ENCODE measurements at regions of chr4 and their contacts with region 1.

Region 1: GRCh38 chr4:39458505-39459300 is at the starts of genes LIAS and RPL9:
- DNase-seq: peak; percentile 97 to 98
- ATAC-seq: peak; percentile 99
- H3K4me3 ChIP-seq: peak within 1 kb of the TSS; percentile 60 to 69
- H3K27ac ChIP-seq: peak within 1 kb of the TSS; percentile 81 to 95
- H3K4me1 ChIP-seq: peaks cover 0 to 1% of the 10 kb centered on the region in 2 donors
- H3K27me3 ChIP-seq: no peaks in the 10 kb centered on the region
- total RNA-seq, gene LIAS: 5.9 to 12.6 TPM
- total RNA-seq, gene RPL9: 1,118 to 1,464 TPM

Region 2: GRCh38 chr4:38243388-38244053 is 1215.2 kb before region 1 on chr4:
- intact Hi-C with region 1: no loop called
- DNase-seq: no peak
- ATAC-seq: no peak
- H3K4me3 ChIP-seq: no peak overlapping the region
- H3K27ac ChIP-seq: no peak overlapping the region
- H3K4me1 ChIP-seq: no peaks in the 10 kb centered on the region
- H3K27me3 ChIP-seq: no peaks in the 10 kb centered on the region

Region 3: GRCh38 chr4:39365830-39366771 is 92.6 kb before region 1 on chr4 and contains the start of gene RFC1:
- intact Hi-C with region 1: loop called in 1 of 2 experiments (anchors 10 kb)
- DNase-seq: peak; percentile 96 to 98
- ATAC-seq: peak; percentile 94
- H3K4me3 ChIP-seq: peak within 1 kb of the TSS; percentile 60 to 66
- H3K27ac ChIP-seq: peak within 1 kb of the TSS in 1 of 2 donors; percentile 49
- H3K4me1 ChIP-seq: peaks cover 0 to 3% of the 10 kb centered on the region in 2 donors
- H3K27me3 ChIP-seq: no peaks in the 10 kb centered on the region
- total RNA-seq, gene RFC1: 36.3 to 58.3 TPM

Region 4: GRCh38 chr4:39638354-39639240 is 179.9 kb after region 1 on chr4 and contains the start of gene SMIM14:
- intact Hi-C with region 1: loop called in 1 of 2 experiments (anchors 2 kb)
- DNase-seq: peak; percentile 99
- ATAC-seq: peak; percentile 99
- H3K4me3 ChIP-seq: peak within 1 kb of the TSS; percentile 82 to 92
- H3K27ac ChIP-seq: peak within 1 kb of the TSS; percentile 10 to 97
- H3K4me1 ChIP-seq: no peaks in the 10 kb centered on the region
- H3K27me3 ChIP-seq: no peaks in the 10 kb centered on the region
- total RNA-seq, gene SMIM14: 68.5 to 72.1 TPM